ENCODE measurements at regions of chr1 and their contacts with region 1.

Region 1: GRCh38 chr1:41573785-41574713 is 89.6 kb upstream of the EDN2 start:
- DNase-seq: peak; percentile 63
- H3K4me3 ChIP-seq: no peak overlapping the region
- H3K27ac ChIP-seq: no peak overlapping the region
- H3K27me3 ChIP-seq: no peaks in the 10 kb centered on the region
- CTCF ChIP-seq: peak; percentile 96

Region 2: GRCh38 chr1:41213341-41213740 is 360.7 kb before region 1 on chr1:
- CTCF ChIA-PET with region 1: no interaction called
- POLR2A ChIA-PET with region 1: no interaction called
- DNase-seq: no peak
- H3K4me3 ChIP-seq: no peak overlapping the region
- H3K27ac ChIP-seq: no peak overlapping the region
- H3K27me3 ChIP-seq: no peaks in the 10 kb centered on the region
- CTCF ChIP-seq: no peak

Region 3: DNA sequence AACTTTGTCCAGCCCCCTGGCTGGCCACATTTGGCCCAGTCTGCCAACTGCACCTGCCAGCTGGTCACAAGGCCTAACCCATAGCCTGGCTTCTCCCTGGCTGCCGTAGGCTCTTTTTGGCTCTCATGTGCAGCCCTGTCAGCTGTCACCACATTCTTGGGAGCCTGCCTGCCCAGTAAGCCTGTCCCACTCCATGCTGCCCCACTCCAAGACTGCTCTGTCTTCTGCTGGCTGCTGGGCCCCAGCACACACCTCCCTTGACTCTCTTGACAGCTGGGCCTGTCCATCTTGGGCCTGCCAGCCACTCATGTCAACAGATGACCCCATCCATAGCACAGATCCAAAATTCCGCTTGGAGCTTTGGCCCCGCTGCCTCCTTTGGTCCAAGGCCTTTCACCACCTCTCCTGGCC is 15.3 kb before region 1 on chr1:
- CTCF ChIA-PET with region 1: interaction called, 10 read pairs
- POLR2A ChIA-PET with region 1: no interaction called
- DNase-seq: no peak
- H3K4me3 ChIP-seq: no peak overlapping the region
- H3K27ac ChIP-seq: no peak overlapping the region
- H3K27me3 ChIP-seq: no peaks in the 10 kb centered on the region
- CTCF ChIP-seq: no peak

Region 4: DNA sequence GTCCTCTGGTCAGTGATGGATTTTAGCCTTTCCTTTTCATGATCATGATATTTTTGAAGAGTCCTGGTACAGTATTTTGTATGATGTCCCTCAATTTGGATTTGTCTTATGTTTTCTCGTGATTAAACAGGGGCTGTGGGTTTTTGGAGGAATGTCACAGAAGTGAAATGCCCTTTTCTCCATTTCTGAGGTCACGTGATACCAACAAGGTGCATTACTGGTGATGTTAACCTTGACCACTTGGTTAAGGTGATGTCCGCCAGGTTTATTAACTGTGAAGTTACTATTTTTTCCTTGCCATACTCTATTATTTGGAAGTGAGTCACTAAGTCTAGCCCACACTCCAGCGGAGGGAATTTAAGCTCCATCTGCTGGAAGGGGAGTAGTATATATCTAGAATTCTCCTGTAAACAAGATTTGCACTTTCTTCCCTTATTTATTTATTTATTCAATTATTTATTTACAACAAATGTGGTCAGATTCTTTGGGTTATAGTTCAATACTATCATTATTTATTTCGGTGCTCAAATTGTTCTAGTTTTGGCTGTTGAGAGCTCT is 221.2 kb after region 1 on chr1:
- CTCF ChIA-PET with region 1: interaction called, 33 read pairs
- POLR2A ChIA-PET with region 1: no interaction called
- DNase-seq: no peak
- H3K4me3 ChIP-seq: no peak overlapping the region
- H3K27ac ChIP-seq: no peak overlapping the region
- H3K27me3 ChIP-seq: no peaks in the 10 kb centered on the region
- CTCF ChIP-seq: peak; percentile 71

Region 5: GRCh38 chr1:41891199-41891896 is 317.3 kb after region 1 on chr1:
- CTCF ChIA-PET with region 1: interaction called, 13 read pairs
- POLR2A ChIA-PET with region 1: no interaction called
- DNase-seq: no peak
- H3K4me3 ChIP-seq: peak overlapping the region; percentile 57
- H3K27ac ChIP-seq: peak overlapping the region; percentile 70
- H3K27me3 ChIP-seq: no peaks in the 10 kb centered on the region
- CTCF ChIP-seq: peak; percentile 33

Region 6: DNA sequence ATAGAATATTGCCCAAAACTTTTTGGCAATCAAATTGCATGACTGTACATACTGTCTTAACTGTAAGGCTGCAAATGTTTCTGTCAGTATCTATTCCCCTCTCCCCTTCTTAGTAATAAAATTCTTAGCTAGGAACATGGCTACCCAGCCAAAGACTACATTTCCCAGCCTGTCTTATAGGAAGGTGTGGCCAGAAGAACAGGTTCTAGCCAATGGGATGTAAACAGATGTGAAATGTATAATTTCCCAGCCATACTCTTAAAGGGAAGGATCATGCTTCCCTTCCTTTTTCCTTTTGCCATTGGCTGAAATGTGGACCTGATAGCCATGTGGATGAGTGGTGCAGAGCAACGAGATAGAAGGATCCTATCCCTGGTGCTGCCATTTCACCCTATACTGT is 351.7 kb after region 1 on chr1:
- CTCF ChIA-PET with region 1: no interaction called
- POLR2A ChIA-PET with region 1: no interaction called
- DNase-seq: no peak
- H3K4me3 ChIP-seq: no peak overlapping the region
- H3K27ac ChIP-seq: no peak overlapping the region
- H3K27me3 ChIP-seq: no peaks in the 10 kb centered on the region
- CTCF ChIP-seq: no peak

Region 7: GRCh38 chr1:42035830-42036604 is 462.0 kb after region 1 on chr1:
- CTCF ChIA-PET with region 1: interaction called, 10 read pairs
- POLR2A ChIA-PET with region 1: no interaction called
- DNase-seq: peak; percentile 76
- H3K4me3 ChIP-seq: peak overlapping the region; percentile 81
- H3K27ac ChIP-seq: peak overlapping the region; percentile 31
- H3K27me3 ChIP-seq: peaks cover 5% of the 10 kb centered on the region
- CTCF ChIP-seq: no peak